Calu3 (cell line): ENCODE measurements at regions of chr6 and their contacts with region 1.

Region 1: GRCh38 chr6:161370880-161371279 is 97.0 kb upstream of the AGPAT4 start:
- DNase-seq: peak; percentile 77
- H3K4me3 Mint-ChIP-seq: no peak overlapping the region
- H3K27ac Mint-ChIP-seq: no peak overlapping the region
- H3K4me1 Mint-ChIP-seq: no peaks in the 10 kb centered on the region
- H3K27me3 Mint-ChIP-seq: no peaks in the 10 kb centered on the region
- CTCF ChIP-seq: peak; percentile 83

Region 2: GRCh38 chr6:160733050-160733646 is 637.7 kb before region 1 on chr6:
- CTCF ChIA-PET with region 1: interaction called, 7 read pairs
- intact Hi-C with region 1: loop called (anchors 1 kb)
- DNase-seq: peak; percentile 63
- H3K4me3 Mint-ChIP-seq: no peak overlapping the region
- H3K27ac Mint-ChIP-seq: no peak overlapping the region
- H3K4me1 Mint-ChIP-seq: no peaks in the 10 kb centered on the region
- H3K27me3 Mint-ChIP-seq: no peaks in the 10 kb centered on the region
- CTCF ChIP-seq: peak; percentile 50

Region 3: GRCh38 chr6:160930547-160931377 is 440.1 kb before region 1 on chr6:
- CTCF ChIA-PET with region 1: interaction called, 5 read pairs
- intact Hi-C with region 1: loop called (anchors 5 kb)
- DNase-seq: peak; percentile 75
- H3K4me3 Mint-ChIP-seq: peak overlapping the region; percentile 63
- H3K27ac Mint-ChIP-seq: no peak overlapping the region
- H3K4me1 Mint-ChIP-seq: no peaks in the 10 kb centered on the region
- H3K27me3 Mint-ChIP-seq: no peaks in the 10 kb centered on the region
- CTCF ChIP-seq: peak; percentile 72

Region 4: GRCh38 chr6:161009991-161010390 is 360.9 kb before region 1 on chr6:
- CTCF ChIA-PET with region 1: no interaction called
- intact Hi-C with region 1: loop called (anchors 5 kb)
- DNase-seq: no peak
- H3K4me3 Mint-ChIP-seq: no peak overlapping the region
- H3K27ac Mint-ChIP-seq: no peak overlapping the region
- H3K4me1 Mint-ChIP-seq: peaks cover 11% of the 10 kb centered on the region
- H3K27me3 Mint-ChIP-seq: no peaks in the 10 kb centered on the region
- CTCF ChIP-seq: no peak

Region 5: GRCh38 chr6:161152907-161153662 is 217.8 kb before region 1 on chr6:
- CTCF ChIA-PET with region 1: interaction called, 6 read pairs
- intact Hi-C with region 1: loop called (anchors 1 kb)
- DNase-seq: peak; percentile 33
- H3K4me3 Mint-ChIP-seq: no peak overlapping the region
- H3K27ac Mint-ChIP-seq: no peak overlapping the region
- H3K4me1 Mint-ChIP-seq: no peaks in the 10 kb centered on the region
- H3K27me3 Mint-ChIP-seq: no peaks in the 10 kb centered on the region
- CTCF ChIP-seq: peak; percentile 49

Region 6: GRCh38 chr6:161233984-161234661 is 136.8 kb before region 1 on chr6:
- CTCF ChIA-PET with region 1: no interaction called
- intact Hi-C with region 1: no loop called
- DNase-seq: no peak
- H3K4me3 Mint-ChIP-seq: no peak overlapping the region
- H3K27ac Mint-ChIP-seq: no peak overlapping the region
- H3K4me1 Mint-ChIP-seq: no peaks in the 10 kb centered on the region
- H3K27me3 Mint-ChIP-seq: no peaks in the 10 kb centered on the region
- CTCF ChIP-seq: no peak

Region 7: DNA sequence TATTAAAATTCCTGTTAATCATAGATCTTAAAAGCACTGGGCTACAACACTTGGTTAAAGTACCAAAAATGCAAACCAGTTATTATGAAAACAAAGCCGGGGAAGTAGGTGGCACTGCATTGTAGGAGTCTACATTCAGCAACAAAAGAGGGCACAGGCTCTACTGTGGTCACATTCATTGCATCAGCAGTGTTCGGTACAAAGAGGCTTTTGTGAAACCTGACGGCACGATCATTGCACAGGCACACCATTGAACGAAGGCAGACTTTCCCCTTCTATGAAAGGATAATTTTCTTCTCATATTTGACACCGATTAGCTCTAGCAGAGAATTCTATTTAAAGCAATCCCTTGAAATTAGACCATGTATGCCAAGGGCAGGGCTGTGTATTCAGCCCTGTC is 52.4 kb before region 1 on chr6:
- CTCF ChIA-PET with region 1: no interaction called
- intact Hi-C with region 1: loop called (anchors 5 kb)
- DNase-seq: peak; percentile 54
- H3K4me3 Mint-ChIP-seq: no peak overlapping the region
- H3K27ac Mint-ChIP-seq: peak overlapping the region; percentile 74
- H3K4me1 Mint-ChIP-seq: peaks cover 29% of the 10 kb centered on the region
- H3K27me3 Mint-ChIP-seq: no peaks in the 10 kb centered on the region
- CTCF ChIP-seq: no peak

Region 8: GRCh38 chr6:161561908-161562307 is 191.0 kb after region 1 on chr6:
- CTCF ChIA-PET with region 1: no interaction called
- intact Hi-C with region 1: no loop called
- DNase-seq: no peak
- H3K4me3 Mint-ChIP-seq: no peak overlapping the region
- H3K27ac Mint-ChIP-seq: no peak overlapping the region
- H3K4me1 Mint-ChIP-seq: no peaks in the 10 kb centered on the region
- H3K27me3 Mint-ChIP-seq: no peaks in the 10 kb centered on the region
- CTCF ChIP-seq: no peak